B cell (primary cell): ENCODE measurements at regions of chr3 and their contacts with region 1.

Region 1: DNA sequence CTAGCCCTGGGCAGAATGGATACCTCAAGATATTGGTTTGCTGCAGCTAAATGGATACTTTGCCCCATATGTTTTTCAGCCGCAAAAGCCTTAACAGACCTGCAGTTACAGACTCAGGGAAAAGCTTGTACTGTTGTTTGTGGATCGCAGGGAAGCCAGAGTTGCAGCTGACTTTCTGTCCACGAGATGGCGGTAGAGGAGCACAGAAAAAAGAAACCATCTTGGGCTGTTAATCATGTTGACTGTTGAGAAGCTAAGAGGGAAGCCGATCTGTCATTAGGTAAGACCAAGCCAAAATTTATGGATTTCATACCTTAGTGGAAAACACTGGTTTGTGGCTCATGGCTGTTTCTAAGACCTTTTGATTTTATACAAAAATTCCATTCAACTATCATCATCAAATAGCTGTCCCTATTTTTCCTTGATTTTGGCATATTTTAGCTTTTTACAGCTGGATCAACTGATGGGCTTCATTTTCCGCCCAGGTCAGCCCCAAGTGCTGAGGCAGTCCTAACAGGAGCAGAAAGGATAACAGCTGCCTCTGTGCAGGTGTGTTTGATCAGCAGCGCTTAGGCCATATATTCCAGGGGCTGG is 205.7 kb upstream of the ZPLD1 start:
- DNase-seq: peak; percentile 87
- ATAC-seq: peak; percentile 53
- H3K4me3 ChIP-seq: no peak overlapping the region
- H3K4me3 Mint-ChIP-seq: no peak overlapping the region
- H3K27ac ChIP-seq: no peak overlapping the region
- H3K27ac Mint-ChIP-seq: no peak overlapping the region
- H3K4me1 ChIP-seq: peaks cover 22 to 28% of the 10 kb centered on the region in 2 donors
- H3K4me1 Mint-ChIP-seq: peaks cover 36% of the 10 kb centered on the region
- H3K27me3 ChIP-seq: no peaks in the 10 kb centered on the region
- H3K27me3 Mint-ChIP-seq: peaks cover 3% of the 10 kb centered on the region
- CTCF ChIP-seq: peak; percentile 90

Region 2: GRCh38 chr3:101791778-101792177 is 437.4 kb before region 1 on chr3:
- CTCF ChIA-PET with region 1: interaction called, 15 read pairs
- POLR2A ChIA-PET with region 1: no interaction called
- intact Hi-C with region 1: no loop called
- DNase-seq: peak; percentile 66
- ATAC-seq: peak; percentile 87
- H3K4me3 ChIP-seq: peak overlapping the region in 1 of 5 experiments; percentile 9
- H3K4me3 Mint-ChIP-seq: peak overlapping the region; percentile 12
- H3K27ac ChIP-seq: peak overlapping the region in 1 of 2 donors; percentile 11
- H3K27ac Mint-ChIP-seq: peak overlapping the region; percentile 2
- H3K4me1 ChIP-seq: peaks cover 18 to 25% of the 10 kb centered on the region in 2 donors
- H3K4me1 Mint-ChIP-seq: peaks cover 35% of the 10 kb centered on the region
- H3K27me3 ChIP-seq: no peaks in the 10 kb centered on the region
- H3K27me3 Mint-ChIP-seq: no peaks in the 10 kb centered on the region
- CTCF ChIP-seq: no peak

Region 3: GRCh38 chr3:101827211-101828174 is 401.7 kb before region 1 on chr3:
- CTCF ChIA-PET with region 1: interaction called, 37 read pairs
- POLR2A ChIA-PET with region 1: interaction called, 4 read pairs
- intact Hi-C with region 1: no loop called
- DNase-seq: peak; percentile 93
- ATAC-seq: peak; percentile 90
- H3K4me3 ChIP-seq: peak overlapping the region; percentile 58 to 83 (median 62)
- H3K4me3 Mint-ChIP-seq: peak overlapping the region; percentile 90
- H3K27ac ChIP-seq: peak overlapping the region; percentile 93 to 97
- H3K27ac Mint-ChIP-seq: peak overlapping the region; percentile 96
- H3K4me1 ChIP-seq: peaks cover 44 to 45% of the 10 kb centered on the region in 2 donors
- H3K4me1 Mint-ChIP-seq: peaks cover 58% of the 10 kb centered on the region
- H3K27me3 ChIP-seq: no peaks in the 10 kb centered on the region
- H3K27me3 Mint-ChIP-seq: no peaks in the 10 kb centered on the region
- CTCF ChIP-seq: no peak

Region 4: GRCh38 chr3:101870138-101870537 is 359.0 kb before region 1 on chr3:
- CTCF ChIA-PET with region 1: interaction called, 10 read pairs
- POLR2A ChIA-PET with region 1: no interaction called
- intact Hi-C with region 1: no loop called
- DNase-seq: no peak
- ATAC-seq: no peak
- H3K4me3 ChIP-seq: no peak overlapping the region
- H3K4me3 Mint-ChIP-seq: no peak overlapping the region
- H3K27ac ChIP-seq: no peak overlapping the region
- H3K27ac Mint-ChIP-seq: no peak overlapping the region
- H3K4me1 ChIP-seq: peaks cover 13 to 15% of the 10 kb centered on the region in 2 donors
- H3K4me1 Mint-ChIP-seq: peaks cover 23% of the 10 kb centered on the region
- H3K27me3 ChIP-seq: no peaks in the 10 kb centered on the region
- H3K27me3 Mint-ChIP-seq: no peaks in the 10 kb centered on the region
- CTCF ChIP-seq: no peak

Region 5: GRCh38 chr3:102057781-102058421 is 171.3 kb before region 1 on chr3:
- CTCF ChIA-PET with region 1: interaction called, 12 read pairs
- POLR2A ChIA-PET with region 1: no interaction called
- intact Hi-C with region 1: no loop called
- DNase-seq: peak; percentile 80
- ATAC-seq: peak; percentile 82
- H3K4me3 ChIP-seq: no peak overlapping the region
- H3K4me3 Mint-ChIP-seq: peak overlapping the region; percentile 57
- H3K27ac ChIP-seq: peak overlapping the region; percentile 9 to 39
- H3K27ac Mint-ChIP-seq: peak overlapping the region; percentile 43
- H3K4me1 ChIP-seq: peaks cover 38 to 39% of the 10 kb centered on the region in 2 donors
- H3K4me1 Mint-ChIP-seq: peaks cover 34% of the 10 kb centered on the region
- H3K27me3 ChIP-seq: no peaks in the 10 kb centered on the region
- H3K27me3 Mint-ChIP-seq: no peaks in the 10 kb centered on the region
- CTCF ChIP-seq: no peak

Region 6: GRCh38 chr3:102529452-102529851 is 300.3 kb after region 1 on chr3:
- CTCF ChIA-PET with region 1: interaction called, 253 read pairs
- POLR2A ChIA-PET with region 1: no interaction called
- intact Hi-C with region 1: no loop called
- DNase-seq: no peak
- ATAC-seq: no peak
- H3K4me3 ChIP-seq: no peak overlapping the region
- H3K4me3 Mint-ChIP-seq: no peak overlapping the region
- H3K27ac ChIP-seq: no peak overlapping the region
- H3K27ac Mint-ChIP-seq: no peak overlapping the region
- H3K4me1 ChIP-seq: peaks cover 4 to 9% of the 10 kb centered on the region in 2 donors
- H3K4me1 Mint-ChIP-seq: peaks cover 16% of the 10 kb centered on the region
- H3K27me3 ChIP-seq: peaks cover 0 to 6% (median 2%) of the 10 kb centered on the region in 4 experiments
- H3K27me3 Mint-ChIP-seq: peaks cover 17% of the 10 kb centered on the region
- CTCF ChIP-seq: no peak